ENCODE measurements at regions of chr22 and their contacts with region 1.

Region 1: GRCh38 chr22:27804470-27805297 is 3.1 kb upstream of the MN1 start:
- DNase-seq: peak; percentile 64
- ATAC-seq: peak; percentile 56
- H3K4me3 ChIP-seq: no peak overlapping the region
- H3K27ac ChIP-seq: no peak overlapping the region
- H3K4me1 ChIP-seq: peaks cover 8% of the 10 kb centered on the region
- H3K27me3 ChIP-seq: no peaks in the 10 kb centered on the region; the same call in 1 of the 2 replicates
- CTCF ChIP-seq: peak; percentile 75
- POLR2A ChIP-seq: no peak
- RAD21 ChIP-seq: peak; percentile 86

Region 2: GRCh38 chr22:26894766-26895485 is 909.8 kb before region 1 on chr22:
- CTCF ChIA-PET with region 1: no interaction called
- POLR2A ChIA-PET with region 1: no interaction called
- dilution Hi-C with region 1: no loop called
- in situ Hi-C with region 1: no loop called
- intact Hi-C with region 1: loop called (anchors 5 kb)
- DNase-seq: peak; percentile 92
- ATAC-seq: peak; percentile 98
- H3K4me3 ChIP-seq: no peak overlapping the region
- H3K27ac ChIP-seq: peak overlapping the region; percentile 94
- H3K4me1 ChIP-seq: peaks cover 24% of the 10 kb centered on the region; the same call in 1 of the 2 replicates
- H3K27me3 ChIP-seq: peaks cover 8% of the 10 kb centered on the region; the same call in 1 of the 2 replicates
- CTCF ChIP-seq: no peak
- POLR2A ChIP-seq: no peak
- RAD21 ChIP-seq: peak; percentile 11; the same call in 1 of the 2 replicates

Region 3: GRCh38 chr22:27203276-27203660 is 601.4 kb before region 1 on chr22:
- CTCF ChIA-PET with region 1: no interaction called
- POLR2A ChIA-PET with region 1: no interaction called
- dilution Hi-C with region 1: no loop called
- in situ Hi-C with region 1: no loop called
- intact Hi-C with region 1: loop called (anchors 5 kb)
- DNase-seq: no peak
- ATAC-seq: no peak
- H3K4me3 ChIP-seq: no peak overlapping the region
- H3K27ac ChIP-seq: no peak overlapping the region
- H3K4me1 ChIP-seq: peaks cover 8% of the 10 kb centered on the region
- H3K27me3 ChIP-seq: peaks cover 9% of the 10 kb centered on the region
- CTCF ChIP-seq: no peak
- POLR2A ChIP-seq: no peak
- RAD21 ChIP-seq: no peak

Region 4: GRCh38 chr22:27531782-27532530 is 272.7 kb before region 1 on chr22:
- CTCF ChIA-PET with region 1: no interaction called
- POLR2A ChIA-PET with region 1: no interaction called
- dilution Hi-C with region 1: no loop called
- in situ Hi-C with region 1: no loop called
- intact Hi-C with region 1: loop called (anchors 10 kb)
- DNase-seq: peak; percentile 82
- ATAC-seq: peak; percentile 80
- H3K4me3 ChIP-seq: no peak overlapping the region
- H3K27ac ChIP-seq: no peak overlapping the region
- H3K4me1 ChIP-seq: peaks cover 6% of the 10 kb centered on the region
- H3K27me3 ChIP-seq: peaks cover 16% of the 10 kb centered on the region
- CTCF ChIP-seq: no peak
- POLR2A ChIP-seq: no peak
- RAD21 ChIP-seq: no peak

Region 5: GRCh38 chr22:28009272-28009827 is 204.7 kb after region 1 on chr22:
- CTCF ChIA-PET with region 1: no interaction called
- POLR2A ChIA-PET with region 1: no interaction called
- dilution Hi-C with region 1: no loop called
- in situ Hi-C with region 1: no loop called
- intact Hi-C with region 1: loop called (anchors 10 kb)
- DNase-seq: peak; percentile 78
- ATAC-seq: peak; percentile 83
- H3K4me3 ChIP-seq: no peak overlapping the region
- H3K27ac ChIP-seq: no peak overlapping the region
- H3K4me1 ChIP-seq: peaks cover 25% of the 10 kb centered on the region
- H3K27me3 ChIP-seq: no peaks in the 10 kb centered on the region
- CTCF ChIP-seq: peak; percentile 98
- POLR2A ChIP-seq: peak; percentile 43; the same call in 1 of the 2 replicates
- RAD21 ChIP-seq: peak; percentile 99

Region 6: DNA sequence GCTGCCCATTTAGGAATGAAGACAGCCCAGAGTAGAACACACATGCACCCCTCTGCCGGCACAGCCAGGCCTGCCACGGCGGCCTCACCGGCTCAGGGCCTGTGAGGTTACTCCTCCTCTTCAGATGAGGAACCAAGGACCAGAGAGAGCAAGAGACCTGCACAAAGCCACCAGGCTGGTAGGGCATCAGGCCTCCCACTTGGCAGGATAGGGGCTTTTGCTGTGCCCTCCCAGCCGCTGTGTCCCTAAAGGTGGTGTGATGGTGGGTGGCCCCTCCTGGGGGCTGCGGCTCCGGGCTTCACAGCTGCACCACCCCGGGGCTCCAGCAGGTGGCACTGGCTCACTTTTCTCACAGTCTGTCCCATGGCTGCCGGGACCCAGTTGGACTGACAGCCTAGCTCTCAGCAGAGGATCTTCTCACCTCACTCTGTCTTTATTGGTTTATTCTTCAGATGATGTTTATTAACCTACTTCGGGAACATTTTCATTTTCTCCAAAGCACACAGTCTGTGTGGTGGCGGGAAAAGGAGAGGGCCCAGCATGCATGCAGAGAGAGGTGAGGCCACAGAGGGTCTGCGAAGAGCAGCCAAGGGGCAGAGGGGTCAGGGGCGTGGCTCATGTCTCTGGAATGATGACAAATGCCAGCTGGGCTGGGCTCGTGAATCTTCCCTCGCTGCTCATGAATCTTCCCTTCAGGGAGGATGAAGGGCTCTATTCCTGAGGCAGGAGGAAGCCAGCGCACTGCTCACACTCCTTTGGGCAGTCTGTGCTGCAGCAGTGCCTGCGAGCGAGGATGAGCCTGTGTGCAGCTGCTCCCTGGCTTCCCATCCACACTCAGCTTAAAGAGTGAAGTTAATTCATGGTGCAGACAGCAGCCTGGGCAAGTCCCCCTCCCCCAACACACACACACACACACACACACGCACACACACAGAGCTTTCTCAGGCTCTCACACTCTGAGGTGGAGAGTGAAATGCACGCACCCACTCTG is 215.5 kb after region 1 on chr22:
- CTCF ChIA-PET with region 1: no interaction called
- POLR2A ChIA-PET with region 1: no interaction called
- dilution Hi-C with region 1: no loop called
- in situ Hi-C with region 1: no loop called
- intact Hi-C with region 1: no loop called
- DNase-seq: peak; percentile 60
- ATAC-seq: peak; percentile 95
- H3K4me3 ChIP-seq: no peak overlapping the region
- H3K27ac ChIP-seq: peak overlapping the region; percentile 21; the same call in 1 of the 2 replicates
- H3K4me1 ChIP-seq: peaks cover 13% of the 10 kb centered on the region
- H3K27me3 ChIP-seq: no peaks in the 10 kb centered on the region
- CTCF ChIP-seq: peak; percentile 89
- POLR2A ChIP-seq: no peak
- RAD21 ChIP-seq: peak; percentile 89